ENCODE measurements at regions of chr9 and their contacts with region 1.

Region 1: DNA sequence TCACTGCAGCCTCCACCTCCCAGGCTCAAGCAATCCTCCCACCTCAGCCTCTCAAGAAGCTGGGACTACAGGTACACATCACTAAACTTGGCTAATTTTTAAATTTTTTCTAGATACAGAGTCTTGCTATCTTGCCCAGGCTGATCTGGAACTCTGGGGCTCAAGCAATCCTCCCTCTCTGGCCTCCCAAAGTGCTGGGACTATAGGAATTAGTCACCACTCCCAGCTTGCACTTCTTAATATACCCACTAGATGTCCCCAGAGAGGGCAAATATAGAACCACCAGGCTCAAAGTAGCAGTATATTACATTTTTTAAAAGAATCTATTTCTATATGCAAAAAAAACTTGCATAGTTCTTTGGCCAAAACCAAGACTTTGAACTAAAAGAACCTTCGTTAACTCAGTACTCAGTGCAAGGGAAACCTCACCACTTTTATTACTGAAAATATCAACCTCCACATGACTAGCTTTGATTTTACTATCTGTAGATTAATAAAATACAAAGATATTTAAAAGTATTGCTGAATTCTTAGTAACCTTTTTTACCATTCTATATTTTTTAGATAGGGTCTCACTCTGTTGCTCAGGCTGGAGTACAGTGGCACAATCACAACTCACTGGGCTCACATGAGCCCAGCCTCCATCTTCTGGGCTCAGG is 25.8 kb upstream of the HSD17B3 start:
- DNase-seq: no peak
- H3K4me3 ChIP-seq: no peak overlapping the region
- H3K27me3 ChIP-seq: no peaks in the 10 kb centered on the region
- CTCF ChIP-seq: peak; percentile 74

Region 2: GRCh38 chr9:96317335-96317980 is 10.4 kb before region 1 on chr9:
- CTCF ChIA-PET with region 1: interaction called, 15 read pairs
- POLR2A ChIA-PET with region 1: no interaction called
- DNase-seq: no peak
- H3K4me3 ChIP-seq: no peak overlapping the region
- H3K27me3 ChIP-seq: no peaks in the 10 kb centered on the region
- CTCF ChIP-seq: peak; percentile 90

Region 3: GRCh38 chr9:96344458-96345180 is 16.8 kb after region 1 on chr9:
- CTCF ChIA-PET with region 1: interaction called, 13 read pairs
- POLR2A ChIA-PET with region 1: no interaction called
- DNase-seq: peak; percentile 46
- H3K4me3 ChIP-seq: no peak overlapping the region
- H3K27me3 ChIP-seq: no peaks in the 10 kb centered on the region
- CTCF ChIP-seq: no peak

Region 4: DNA sequence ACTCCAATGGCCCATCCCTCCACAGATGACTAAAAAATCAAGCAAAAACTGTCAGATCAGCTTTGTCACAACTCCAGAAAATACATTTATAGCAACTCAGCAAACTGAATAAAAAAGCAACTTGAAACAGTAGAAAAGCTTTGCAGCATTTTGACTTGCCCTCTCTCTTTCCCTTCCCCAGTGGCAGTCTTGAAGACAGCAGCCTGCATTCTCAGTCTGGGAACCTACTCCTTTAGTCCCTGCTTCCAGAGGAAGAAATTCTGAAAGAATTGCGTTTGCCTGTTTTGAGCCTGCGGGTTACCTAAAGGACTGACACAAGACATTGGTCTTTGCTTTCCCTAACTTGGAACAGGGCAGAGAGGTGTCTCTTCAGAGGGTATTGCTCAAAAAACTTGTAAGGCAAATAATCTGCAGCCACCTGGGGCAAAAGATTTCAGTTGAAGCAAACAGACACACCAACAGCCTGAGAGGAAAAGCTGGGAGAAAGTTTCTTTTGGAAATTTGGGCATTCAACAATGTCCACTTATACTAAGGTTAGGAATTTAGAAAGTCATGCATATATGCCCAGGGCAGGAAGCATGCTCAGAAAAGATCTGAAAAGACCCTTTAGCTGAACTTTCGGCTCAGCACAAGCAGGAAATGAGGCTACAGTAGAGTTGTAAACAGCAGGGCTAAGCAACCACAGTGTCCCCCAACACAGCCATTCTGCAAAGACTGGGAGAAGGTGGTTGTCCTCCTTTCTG is 70.9 kb after region 1 on chr9:
- CTCF ChIA-PET with region 1: no interaction called
- POLR2A ChIA-PET with region 1: no interaction called
- DNase-seq: no peak
- H3K4me3 ChIP-seq: no peak overlapping the region
- H3K27me3 ChIP-seq: no peaks in the 10 kb centered on the region
- CTCF ChIP-seq: no peak

Region 5: GRCh38 chr9:96654443-96655197 is 326.8 kb after region 1 on chr9:
- CTCF ChIA-PET with region 1: interaction called, 10 read pairs
- POLR2A ChIA-PET with region 1: no interaction called
- DNase-seq: peak; percentile 50
- H3K4me3 ChIP-seq: peak overlapping the region; percentile 72
- H3K27me3 ChIP-seq: no peaks in the 10 kb centered on the region
- CTCF ChIP-seq: no peak

Region 6: DNA sequence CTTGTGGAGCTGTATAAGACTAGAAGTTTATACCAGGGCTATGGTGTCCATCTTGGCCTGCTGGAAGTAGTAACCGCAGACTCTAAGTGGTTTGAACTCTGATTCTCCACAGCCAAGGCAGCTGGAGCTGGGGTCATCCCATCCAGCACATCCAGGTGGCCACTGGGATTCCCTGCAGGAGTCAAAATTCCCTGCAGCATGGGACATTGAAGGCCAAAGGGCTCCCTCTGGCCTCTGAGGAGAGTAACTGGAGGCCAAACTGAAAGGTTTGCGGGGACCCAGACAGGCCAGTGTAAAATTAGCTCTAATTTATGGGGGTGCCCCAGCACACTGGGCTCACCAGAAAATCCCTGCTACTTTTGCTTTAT is 339.5 kb after region 1 on chr9:
- CTCF ChIA-PET with region 1: interaction called, 47 read pairs
- POLR2A ChIA-PET with region 1: interaction called, 6 read pairs
- DNase-seq: no peak
- H3K4me3 ChIP-seq: no peak overlapping the region
- H3K27me3 ChIP-seq: no peaks in the 10 kb centered on the region
- CTCF ChIP-seq: no peak